ENCODE measurements at regions of chr6 and their contacts with region 1.

Region 1: GRCh38 chr6:30541515-30542403 is 14.5 kb downstream of the GNL1 start:
- DNase-seq: peak; percentile 65
- ATAC-seq: peak; percentile 84
- H3K4me3 Mint-ChIP-seq: peak overlapping the region; percentile 81
- H3K27ac Mint-ChIP-seq: peak overlapping the region; percentile 81
- H3K4me1 Mint-ChIP-seq: peaks cover 30% of the 10 kb centered on the region
- H3K27me3 Mint-ChIP-seq: no peaks in the 10 kb centered on the region
- CTCF ChIP-seq: peak; percentile 98

Region 2: DNA sequence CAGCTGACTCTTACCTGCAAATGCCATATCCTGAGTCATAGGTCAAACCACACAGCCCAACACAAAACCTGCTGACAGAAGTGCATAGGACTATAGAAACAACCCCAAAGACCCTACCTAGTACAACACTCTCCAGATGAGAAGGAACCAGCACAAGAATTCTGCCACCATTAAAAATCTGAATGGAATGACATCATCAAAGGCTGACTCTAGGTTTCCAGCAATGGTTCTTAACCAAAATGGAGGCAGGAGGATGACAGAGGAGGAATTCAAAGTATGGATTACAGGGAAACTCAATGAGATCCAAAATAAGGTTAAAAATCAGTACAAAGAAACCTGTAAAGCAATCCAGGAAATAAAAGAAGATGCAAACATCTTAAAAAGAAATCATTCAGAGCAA is 1209.1 kb before region 1 on chr6:
- CTCF ChIA-PET with region 1: no interaction called
- POLR2A ChIA-PET with region 1: no interaction called
- intact Hi-C with region 1: no loop called
- DNase-seq: no peak
- ATAC-seq: no peak
- H3K4me3 Mint-ChIP-seq: no peak overlapping the region
- H3K27ac Mint-ChIP-seq: no peak overlapping the region
- H3K4me1 Mint-ChIP-seq: no peaks in the 10 kb centered on the region
- H3K27me3 Mint-ChIP-seq: peaks cover 17% of the 10 kb centered on the region
- CTCF ChIP-seq: no peak

Region 3: DNA sequence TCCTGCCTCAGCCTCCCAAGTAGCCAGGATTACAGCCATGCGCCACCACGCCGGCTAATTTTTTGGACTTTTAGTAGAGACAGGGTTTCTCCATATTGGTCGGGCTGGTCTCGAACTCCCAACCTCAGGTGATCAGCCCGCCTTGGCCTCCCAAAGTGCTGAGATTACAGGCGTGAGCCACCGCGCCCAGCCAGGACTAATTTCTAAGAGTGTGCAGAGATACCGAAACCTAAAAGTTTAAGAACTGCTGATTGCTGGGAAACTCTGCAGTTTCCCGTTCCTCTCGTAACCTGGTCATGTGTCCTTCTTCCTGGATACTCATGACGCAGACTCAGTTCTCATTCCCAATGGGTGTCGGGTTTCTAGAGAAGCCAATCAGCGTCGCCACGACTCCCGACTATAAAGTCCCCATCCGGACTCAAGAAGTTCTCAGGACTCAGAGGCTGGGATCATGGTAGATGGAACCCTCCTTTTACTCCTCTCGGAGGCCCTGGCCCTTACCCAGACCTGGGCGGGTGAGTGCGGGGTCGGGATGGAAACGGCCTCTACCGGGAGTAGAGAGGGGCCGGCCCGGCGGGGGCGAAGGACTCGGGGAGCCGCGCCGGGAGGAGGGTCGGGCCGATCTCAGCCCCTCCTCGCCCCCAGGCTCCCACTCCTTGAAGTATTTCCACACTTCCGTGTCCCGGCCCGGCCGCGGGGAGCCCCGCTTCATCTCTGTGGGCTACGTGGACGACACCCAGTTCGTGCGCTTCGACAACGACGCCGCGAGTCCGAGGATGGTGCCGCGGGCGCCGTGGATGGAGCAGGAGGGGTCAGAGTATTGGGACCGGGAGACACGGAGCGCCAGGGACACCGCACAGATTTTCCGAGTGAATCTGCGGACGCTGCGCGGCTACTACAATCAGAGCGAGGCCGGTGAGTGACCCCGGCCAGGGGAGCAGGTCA is 52.4 kb before region 1 on chr6 and contains the start of gene HLA-E:
- CTCF ChIA-PET with region 1: interaction called, 411 read pairs
- POLR2A ChIA-PET with region 1: interaction called, 147 read pairs
- intact Hi-C with region 1: loop called (anchors 1 kb)
- DNase-seq: peak; percentile 70
- ATAC-seq: peak; percentile 83
- H3K4me3 Mint-ChIP-seq: peak within 1 kb of the TSS; percentile 98
- H3K27ac Mint-ChIP-seq: peak within 1 kb of the TSS; percentile 97
- H3K4me1 Mint-ChIP-seq: peaks cover 58% of the 10 kb centered on the region
- H3K27me3 Mint-ChIP-seq: no peaks in the 10 kb centered on the region
- CTCF ChIP-seq: no peak
- total RNA-seq, gene HLA-E: 737 and 740 TPM in 2 replicates

Region 4: GRCh38 chr6:30515932-30516753 is 25.6 kb before region 1 on chr6:
- CTCF ChIA-PET with region 1: interaction called, 20 read pairs
- POLR2A ChIA-PET with region 1: interaction called, 14 read pairs
- intact Hi-C with region 1: no loop called
- DNase-seq: peak; percentile 69
- ATAC-seq: peak; percentile 82
- H3K4me3 Mint-ChIP-seq: peak overlapping the region; percentile 87
- H3K27ac Mint-ChIP-seq: peak overlapping the region; percentile 97
- H3K4me1 Mint-ChIP-seq: peaks cover 71% of the 10 kb centered on the region
- H3K27me3 Mint-ChIP-seq: no peaks in the 10 kb centered on the region
- CTCF ChIP-seq: no peak

Region 5: GRCh38 chr6:30590994-30591393 is 49.2 kb after region 1 on chr6:
- CTCF ChIA-PET with region 1: interaction called, 16 read pairs
- POLR2A ChIA-PET with region 1: interaction called, 5 read pairs
- intact Hi-C with region 1: no loop called
- DNase-seq: no peak
- ATAC-seq: no peak
- H3K4me3 Mint-ChIP-seq: no peak overlapping the region
- H3K27ac Mint-ChIP-seq: no peak overlapping the region
- H3K4me1 Mint-ChIP-seq: no peaks in the 10 kb centered on the region
- H3K27me3 Mint-ChIP-seq: no peaks in the 10 kb centered on the region
- CTCF ChIP-seq: no peak

Region 6: DNA sequence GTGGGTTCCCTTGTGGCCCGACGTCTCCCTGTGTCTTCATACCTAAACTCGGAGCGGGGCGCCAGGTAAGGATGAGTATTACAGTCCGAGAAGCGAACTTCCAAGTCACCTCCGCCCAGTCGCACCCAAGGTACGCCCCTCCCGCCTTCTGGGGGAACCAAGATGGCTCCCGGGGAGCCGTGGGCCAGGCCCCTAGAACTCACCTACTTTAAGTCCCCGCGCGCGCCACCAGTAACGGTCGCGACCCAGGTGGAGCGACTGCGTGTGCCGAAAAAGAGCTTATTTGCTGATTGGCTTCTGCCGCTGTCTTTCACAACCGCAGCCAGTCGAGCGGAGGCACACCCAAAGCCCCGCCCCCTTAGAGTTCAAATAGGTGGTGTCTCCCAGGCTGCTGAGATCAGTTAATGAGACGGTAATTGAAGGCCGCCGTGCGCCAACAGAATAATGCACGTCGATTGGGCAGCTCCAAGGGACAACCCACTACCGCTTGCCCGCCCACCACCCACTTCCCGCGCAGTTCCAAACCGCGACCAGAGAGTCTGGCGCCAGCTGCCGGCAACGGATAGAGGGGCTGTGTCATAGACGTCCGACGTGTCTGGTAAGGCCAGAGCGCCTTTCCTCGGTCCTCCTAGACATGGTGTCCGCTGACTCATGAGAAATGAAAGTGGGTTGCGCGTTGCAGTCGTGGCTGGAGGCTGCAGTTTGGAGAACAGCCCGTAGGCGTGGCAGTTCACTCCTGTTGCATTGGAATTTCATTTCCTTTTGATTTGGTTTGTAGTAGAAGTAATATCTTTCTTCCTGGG is 175.5 kb after region 1 on chr6 and contains the start of gene MDC1:
- CTCF ChIA-PET with region 1: interaction called, 11 read pairs
- POLR2A ChIA-PET with region 1: interaction called, 4 read pairs
- intact Hi-C with region 1: no loop called
- DNase-seq: peak; percentile 91
- ATAC-seq: peak; percentile 73
- H3K4me3 Mint-ChIP-seq: peak within 1 kb of the TSS; percentile 99
- H3K27ac Mint-ChIP-seq: peak within 1 kb of the TSS; percentile 99
- H3K4me1 Mint-ChIP-seq: peaks cover 57% of the 10 kb centered on the region
- H3K27me3 Mint-ChIP-seq: no peaks in the 10 kb centered on the region
- CTCF ChIP-seq: no peak
- total RNA-seq, gene MDC1: 62.4 and 65.6 TPM in 2 replicates